Gastrocnemius medialis (tissue), 4 donors: ENCODE measurements at regions of chr2 and their contacts with region 1.

Region 1: DNA sequence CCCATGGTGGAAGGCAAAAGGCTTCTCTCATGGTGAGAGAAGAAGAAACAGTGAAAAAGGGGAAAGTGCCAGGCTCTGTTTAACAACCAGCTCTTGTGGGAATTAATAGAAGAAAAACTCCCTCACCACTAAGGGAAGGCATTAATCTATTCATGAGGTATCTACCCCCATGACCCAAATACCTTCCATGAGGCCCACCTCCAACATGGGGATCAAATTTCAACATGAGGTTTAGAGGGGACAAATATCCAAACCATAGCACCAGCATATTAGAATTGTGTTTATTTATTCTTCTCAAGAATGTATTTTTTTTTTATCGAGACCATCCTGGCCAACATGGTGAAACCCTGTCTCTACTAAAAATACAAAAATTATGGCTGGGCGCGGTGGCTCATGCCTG is 4.9 kb upstream of the CFLAR start:
- DNase-seq: no peak
- ATAC-seq: peak in 1 of 2 donors; percentile 4
- H3K4me3 ChIP-seq: no peak overlapping the region
- H3K27ac ChIP-seq: peak overlapping the region; percentile 4 to 72 (median 56)
- H3K4me1 ChIP-seq: peaks cover 18 to 22% of the 10 kb centered on the region in 2 donors
- H3K27me3 ChIP-seq: no peaks in the 10 kb centered on the region
- CTCF ChIP-seq: no peak
- POLR2A ChIP-seq: no peak

Region 2: GRCh38 chr2:200877443-200877842 is 233.7 kb before region 1 on chr2:
- in situ Hi-C with region 1: no loop called
- intact Hi-C with region 1: no loop called
- DNase-seq: no peak
- ATAC-seq: no peak
- H3K4me3 ChIP-seq: no peak overlapping the region
- H3K27ac ChIP-seq: no peak overlapping the region
- H3K4me1 ChIP-seq: no peaks in the 10 kb centered on the region
- H3K27me3 ChIP-seq: no peaks in the 10 kb centered on the region
- CTCF ChIP-seq: no peak
- POLR2A ChIP-seq: no peak

Region 3: GRCh38 chr2:201059961-201060755 is 50.9 kb before region 1 on chr2:
- in situ Hi-C with region 1: no loop called
- intact Hi-C with region 1: loop called (anchors 2 kb)
- DNase-seq: no peak
- ATAC-seq: no peak
- H3K4me3 ChIP-seq: no peak overlapping the region
- H3K27ac ChIP-seq: no peak overlapping the region
- H3K4me1 ChIP-seq: peaks cover 23 to 30% of the 10 kb centered on the region in 2 donors
- H3K27me3 ChIP-seq: no peaks in the 10 kb centered on the region
- CTCF ChIP-seq: no peak
- POLR2A ChIP-seq: no peak

Region 4: GRCh38 chr2:201980389-201980831 is 869.3 kb after region 1 on chr2:
- in situ Hi-C with region 1: no loop called
- intact Hi-C with region 1: no loop called
- DNase-seq: no peak
- ATAC-seq: no peak
- H3K4me3 ChIP-seq: no peak overlapping the region
- H3K27ac ChIP-seq: no peak overlapping the region
- H3K4me1 ChIP-seq: peaks cover 0 to 3% of the 10 kb centered on the region in 2 donors
- H3K27me3 ChIP-seq: no peaks in the 10 kb centered on the region
- CTCF ChIP-seq: no peak
- POLR2A ChIP-seq: no peak